ENCODE measurements at regions of chr7 and their contacts with region 1.

Region 1: DNA sequence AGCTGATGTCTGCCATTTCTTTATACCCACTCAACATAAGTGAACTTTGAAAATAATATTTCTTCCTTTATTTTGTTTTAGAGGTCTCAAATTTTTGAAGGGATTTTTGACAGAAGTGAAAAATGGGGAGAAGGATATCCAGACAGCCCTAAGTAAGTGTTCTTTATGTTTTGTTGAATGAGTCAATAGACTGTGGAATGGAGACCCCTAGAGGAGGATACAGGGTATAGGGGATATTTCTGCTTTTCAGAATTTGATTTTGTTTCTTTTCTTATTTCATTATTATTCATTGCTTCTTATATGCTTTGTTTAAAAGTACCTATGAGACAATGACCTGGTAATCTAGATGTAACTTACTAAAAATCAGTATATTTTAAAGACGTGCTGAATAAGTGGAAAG is 34.4 kb downstream of the PLEKHA8 start:
- DNase-seq: no peak
- ATAC-seq: peak; percentile 91
- H3K4me3 ChIP-seq: no peak overlapping the region
- H3K27ac ChIP-seq: no peak overlapping the region
- H3K4me1 ChIP-seq: no peaks in the 10 kb centered on the region
- H3K27me3 ChIP-seq: no peaks in the 10 kb centered on the region
- CTCF ChIP-seq: peak; percentile 57 to 69 (median 62); a peak in 5 of 6 replicates
- EP300 ChIP-seq: no peak
- POLR2A ChIP-seq: no peak
- RAD21 ChIP-seq: peak; percentile 80

Region 2: DNA sequence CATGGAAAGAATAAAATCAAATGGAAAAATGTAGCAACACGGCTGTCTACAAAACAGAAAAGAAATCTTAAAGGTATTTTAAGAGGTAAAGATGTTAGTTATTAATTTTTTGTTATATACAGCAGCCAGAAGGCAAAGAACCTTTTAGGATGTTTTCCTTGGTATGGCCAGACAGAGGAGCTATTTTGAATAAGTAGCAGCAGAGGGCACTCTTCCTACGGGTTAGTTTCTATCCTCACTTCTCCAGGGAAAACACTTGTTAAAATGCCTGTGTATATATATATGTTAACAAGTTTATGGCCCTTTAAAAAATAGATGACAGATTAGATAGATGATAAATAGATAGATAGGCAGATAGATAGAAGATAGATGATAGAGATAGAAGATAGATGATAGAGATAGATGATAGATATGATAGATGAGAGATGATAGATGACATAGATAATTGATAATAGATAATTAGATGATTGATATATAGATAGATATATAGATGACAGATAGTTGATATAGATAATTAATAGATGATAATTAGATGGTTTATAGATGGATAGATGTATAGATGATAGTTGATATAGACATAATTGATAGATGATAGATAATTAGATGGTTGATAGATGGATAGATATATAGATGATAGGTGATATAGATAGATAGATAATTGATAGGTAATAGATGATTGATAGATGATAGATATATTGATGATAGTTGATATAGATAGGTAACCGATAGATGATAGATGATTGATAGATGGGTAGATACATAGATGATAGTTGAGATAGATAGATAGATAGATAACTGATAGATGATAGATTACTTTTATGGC is 314.1 kb before region 1 on chr7:
- CTCF ChIA-PET with region 1: interaction called, 12 read pairs
- POLR2A ChIA-PET with region 1: no interaction called
- RAD21 ChIA-PET with region 1: interaction called, 8 read pairs
- SMC1A ChIA-PET with region 1: interaction called, 4 read pairs
- in situ Hi-C with region 1: no loop called
- intact Hi-C with region 1: loop called (anchors 5 kb)
- DNase-seq: no peak
- ATAC-seq: 0 out of 3 replicates have a peak, but pooled peaks have one; percentile 35
- H3K4me3 ChIP-seq: no peak overlapping the region
- H3K27ac ChIP-seq: no peak overlapping the region
- H3K4me1 ChIP-seq: no peaks in the 10 kb centered on the region
- H3K27me3 ChIP-seq: peaks cover 0 to 1% of the 10 kb centered on the region in 2 experiments; a peak in 1 of 4 replicates
- CTCF ChIP-seq: peak; percentile 17 to 30 (median 24); a peak in 4 of 6 replicates
- EP300 ChIP-seq: no peak
- POLR2A ChIP-seq: no peak
- RAD21 ChIP-seq: peak; percentile 36

Region 3: DNA sequence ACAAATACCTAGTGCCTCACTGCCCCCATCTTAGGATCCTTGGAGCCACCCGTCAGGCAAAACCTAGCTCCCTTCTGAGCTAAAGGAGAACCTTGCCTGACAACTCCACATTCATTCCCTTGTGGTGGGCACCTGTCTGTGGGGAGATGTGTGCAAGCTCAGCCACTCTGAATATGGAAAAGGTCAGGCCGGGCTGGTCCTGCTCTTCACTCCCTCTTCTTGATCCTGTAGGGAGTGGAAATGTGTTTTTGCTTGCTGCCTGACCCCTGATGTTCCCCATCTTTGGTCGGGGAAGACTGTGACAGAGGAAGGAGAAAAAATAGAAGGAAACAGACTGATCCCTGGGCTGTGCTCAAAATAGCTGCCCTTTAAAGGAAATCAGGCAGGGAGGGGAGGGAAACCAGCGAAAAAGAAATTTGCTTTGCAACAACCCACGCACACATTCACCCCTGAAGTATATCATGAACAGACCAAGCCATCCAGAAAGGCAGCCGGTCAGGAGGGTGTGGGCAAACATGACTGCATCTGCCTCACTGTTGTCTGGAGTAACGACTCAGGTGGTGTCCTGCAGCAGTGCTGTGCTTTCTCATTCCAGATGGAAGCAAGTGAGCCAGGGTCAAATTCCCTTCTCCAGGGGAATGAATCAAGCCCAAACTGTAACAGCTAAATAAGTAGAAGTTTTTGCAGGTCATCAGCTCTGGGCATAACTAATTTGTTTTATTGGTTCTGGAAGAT is 146.9 kb before region 1 on chr7:
- CTCF ChIA-PET with region 1: interaction called, 68 read pairs
- POLR2A ChIA-PET with region 1: no interaction called
- RAD21 ChIA-PET with region 1: interaction called, 11 read pairs
- SMC1A ChIA-PET with region 1: interaction called, 40 read pairs
- in situ Hi-C with region 1: no loop called
- intact Hi-C with region 1: no loop called
- DNase-seq: no peak
- ATAC-seq: no peak
- H3K4me3 ChIP-seq: no peak overlapping the region
- H3K27ac ChIP-seq: no peak overlapping the region
- H3K4me1 ChIP-seq: no peaks in the 10 kb centered on the region
- H3K27me3 ChIP-seq: no peaks in the 10 kb centered on the region
- CTCF ChIP-seq: no peak
- EP300 ChIP-seq: no peak
- POLR2A ChIP-seq: no peak
- RAD21 ChIP-seq: no peak

Region 4: DNA sequence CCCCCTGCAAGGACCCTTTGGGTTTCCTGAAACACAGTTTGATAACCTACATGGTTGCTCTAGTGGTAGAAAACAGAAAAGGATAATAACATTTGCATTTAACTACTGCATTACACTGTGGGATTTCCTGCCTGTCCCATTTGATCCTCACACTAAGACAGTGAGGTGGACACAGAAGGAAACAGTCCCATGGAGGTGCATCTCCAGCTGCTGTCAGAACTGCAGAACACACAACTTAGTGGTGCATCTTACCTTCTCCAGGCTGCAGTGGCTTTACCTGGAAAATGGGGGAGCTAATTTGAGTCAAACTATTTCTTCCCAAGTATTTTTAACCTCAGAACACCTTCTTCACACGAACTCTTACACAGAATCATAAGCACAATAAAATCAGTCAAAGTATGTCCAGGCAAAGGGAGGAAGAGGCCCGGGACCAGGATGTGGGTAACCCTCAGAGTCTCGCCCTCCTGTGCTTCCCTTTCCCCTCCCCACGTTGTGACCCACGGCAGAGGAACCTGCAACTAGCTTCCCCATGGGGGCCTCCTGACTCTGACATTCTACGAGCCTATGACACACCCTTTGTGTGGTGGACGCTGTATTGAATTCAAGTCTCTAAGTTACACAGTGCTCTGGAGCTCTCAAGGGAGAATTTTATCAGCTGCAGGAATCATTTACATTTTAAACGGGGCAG is 106.6 kb before region 1 on chr7:
- CTCF ChIA-PET with region 1: interaction called, 42 read pairs
- POLR2A ChIA-PET with region 1: no interaction called
- RAD21 ChIA-PET with region 1: interaction called, 14 read pairs
- SMC1A ChIA-PET with region 1: interaction called, 19 read pairs
- in situ Hi-C with region 1: no loop called
- intact Hi-C with region 1: loop called (anchors 2 kb)
- DNase-seq: no peak
- ATAC-seq: peak; percentile 83
- H3K4me3 ChIP-seq: no peak overlapping the region
- H3K27ac ChIP-seq: peak overlapping the region; percentile 4
- H3K4me1 ChIP-seq: peaks cover 17% of the 10 kb centered on the region
- H3K27me3 ChIP-seq: no peaks in the 10 kb centered on the region
- CTCF ChIP-seq: no peak
- EP300 ChIP-seq: no peak
- POLR2A ChIP-seq: no peak
- RAD21 ChIP-seq: peak; percentile 33

Region 5: DNA sequence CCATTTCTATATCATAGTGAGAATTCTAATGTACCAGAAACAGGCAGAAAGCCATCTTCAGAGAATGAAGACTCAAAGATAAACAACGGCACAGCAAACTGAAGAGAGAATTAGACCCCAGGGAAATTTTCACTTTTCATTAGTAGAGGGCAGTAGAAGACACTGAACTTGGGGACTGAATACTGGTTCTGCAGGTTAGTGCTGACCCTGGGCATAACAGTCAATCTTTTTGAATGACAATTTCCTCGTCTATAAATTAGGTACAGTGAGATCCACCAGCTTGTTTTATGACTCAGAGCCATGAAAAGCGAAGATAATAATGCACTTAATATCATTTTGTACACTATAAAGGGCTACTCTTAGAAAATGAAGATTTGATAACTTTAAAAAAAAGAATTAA is 49.8 kb before region 1 on chr7:
- CTCF ChIA-PET with region 1: interaction called, 15 read pairs
- POLR2A ChIA-PET with region 1: no interaction called
- RAD21 ChIA-PET with region 1: no interaction called
- SMC1A ChIA-PET with region 1: interaction called, 3 read pairs
- in situ Hi-C with region 1: no loop called
- intact Hi-C with region 1: no loop called
- DNase-seq: no peak
- ATAC-seq: no peak
- H3K4me3 ChIP-seq: no peak overlapping the region
- H3K27ac ChIP-seq: no peak overlapping the region
- H3K4me1 ChIP-seq: no peaks in the 10 kb centered on the region
- H3K27me3 ChIP-seq: no peaks in the 10 kb centered on the region
- CTCF ChIP-seq: no peak
- EP300 ChIP-seq: no peak
- POLR2A ChIP-seq: no peak
- RAD21 ChIP-seq: no peak

Region 6: DNA sequence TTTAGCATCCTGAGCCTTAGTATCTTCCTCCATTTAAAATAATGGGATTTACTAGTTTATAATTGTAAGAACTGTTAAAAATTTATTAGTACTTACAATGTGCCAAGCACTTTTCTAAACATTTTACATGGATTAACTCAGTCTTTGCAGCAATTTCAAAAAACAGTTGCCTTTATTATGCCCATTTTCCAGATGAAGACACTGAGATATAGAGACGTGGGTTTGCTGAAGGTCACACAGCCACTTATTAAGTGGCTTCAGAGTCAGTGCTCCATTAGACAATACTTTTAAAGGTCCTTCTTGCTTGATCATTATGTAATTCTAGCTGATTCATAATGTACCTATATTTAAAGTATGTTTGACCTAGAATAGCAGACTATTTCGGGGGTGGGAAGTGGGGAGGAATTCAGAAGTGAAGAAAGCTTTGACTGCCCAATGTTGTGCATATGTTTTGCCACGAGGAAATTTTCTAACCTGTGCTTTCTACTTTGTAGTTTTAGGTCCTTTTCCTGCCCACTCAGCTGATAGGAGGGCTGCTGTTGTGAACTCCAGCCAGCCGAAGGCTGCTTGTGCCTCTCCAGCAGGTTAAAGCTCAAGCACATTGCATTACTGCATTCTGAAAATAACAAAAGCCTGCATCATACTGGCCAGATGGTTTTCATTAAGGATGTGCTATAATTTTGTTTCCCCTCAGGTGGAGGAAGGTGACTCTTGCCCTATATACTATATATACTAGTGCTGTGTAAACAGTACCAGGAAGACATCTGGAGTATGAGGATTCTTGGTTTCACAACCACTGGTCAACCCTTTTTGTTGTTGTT is 30.1 kb before region 1 on chr7:
- CTCF ChIA-PET with region 1: interaction called, 20 read pairs
- POLR2A ChIA-PET with region 1: interaction called, 4 read pairs
- RAD21 ChIA-PET with region 1: interaction called, 8 read pairs
- SMC1A ChIA-PET with region 1: interaction called, 19 read pairs
- in situ Hi-C with region 1: no loop called
- intact Hi-C with region 1: no loop called
- DNase-seq: no peak
- ATAC-seq: no peak
- H3K4me3 ChIP-seq: no peak overlapping the region
- H3K27ac ChIP-seq: no peak overlapping the region
- H3K4me1 ChIP-seq: peaks cover 7% of the 10 kb centered on the region; the same call in 1 of the 2 replicates
- H3K27me3 ChIP-seq: no peaks in the 10 kb centered on the region
- CTCF ChIP-seq: no peak
- EP300 ChIP-seq: no peak
- POLR2A ChIP-seq: no peak
- RAD21 ChIP-seq: no peak

Region 7: DNA sequence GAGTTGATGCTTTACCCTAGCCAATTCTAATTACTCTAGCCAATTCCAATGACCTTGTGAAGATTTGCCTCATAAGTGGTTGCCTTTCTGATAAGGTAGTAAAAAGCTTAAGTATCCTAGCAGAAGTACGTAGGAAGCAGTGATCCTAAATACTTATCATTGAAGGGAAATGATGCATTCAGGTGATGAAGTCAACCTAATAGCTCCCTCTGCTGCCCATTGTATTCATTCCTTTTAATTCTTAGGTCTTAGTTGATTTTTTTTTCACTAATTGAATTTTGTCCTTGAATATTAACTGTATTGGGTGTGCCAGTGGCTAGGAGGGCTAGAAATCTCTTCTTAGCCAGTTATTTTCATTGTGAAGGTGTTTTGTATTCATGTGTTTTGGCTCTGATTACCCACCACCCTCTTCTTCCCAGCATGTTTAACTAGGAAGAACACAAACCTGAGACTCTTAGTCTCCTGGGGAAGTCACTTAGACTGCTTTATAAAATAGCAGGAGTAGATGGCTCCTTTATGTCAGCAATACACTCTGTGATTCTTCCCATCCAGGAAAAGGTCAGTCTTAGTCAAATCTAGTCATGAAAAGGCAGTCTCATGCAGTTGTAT is 11.9 kb after region 1 on chr7:
- CTCF ChIA-PET with region 1: interaction called, 96 read pairs
- POLR2A ChIA-PET with region 1: no interaction called
- RAD21 ChIA-PET with region 1: interaction called, 9 read pairs
- SMC1A ChIA-PET with region 1: interaction called, 5 read pairs
- in situ Hi-C with region 1: no loop called
- intact Hi-C with region 1: no loop called
- DNase-seq: no peak
- ATAC-seq: peak; percentile 57
- H3K4me3 ChIP-seq: no peak overlapping the region
- H3K27ac ChIP-seq: no peak overlapping the region
- H3K4me1 ChIP-seq: no peaks in the 10 kb centered on the region
- H3K27me3 ChIP-seq: no peaks in the 10 kb centered on the region
- CTCF ChIP-seq: peak; percentile 41 to 55 (median 55); a peak in 3 of 6 replicates
- EP300 ChIP-seq: no peak
- POLR2A ChIP-seq: no peak
- RAD21 ChIP-seq: peak; percentile 40; the same call in 1 of the 2 replicates

Region 8: GRCh38 chr7:30363778-30364563 is 301.4 kb after region 1 on chr7:
- CTCF ChIA-PET with region 1: no interaction called
- POLR2A ChIA-PET with region 1: no interaction called
- RAD21 ChIA-PET with region 1: no interaction called
- SMC1A ChIA-PET with region 1: no interaction called
- in situ Hi-C with region 1: no loop called
- intact Hi-C with region 1: no loop called
- DNase-seq: no peak
- ATAC-seq: peak; percentile 22; the same call in 2 of the 3 replicates
- H3K4me3 ChIP-seq: no peak overlapping the region
- H3K27ac ChIP-seq: no peak overlapping the region
- H3K4me1 ChIP-seq: no peaks in the 10 kb centered on the region
- H3K27me3 ChIP-seq: no peaks in the 10 kb centered on the region
- CTCF ChIP-seq: no peak
- EP300 ChIP-seq: no peak
- POLR2A ChIP-seq: no peak
- RAD21 ChIP-seq: no peak

Measured in GM12878 (cell line).